Activated CD8-positive, alpha-beta T cell treated with anti-CD3 and anti-CD28 coated beads, Interleukin-2, amount 10 ng/mL, durations not matched to agents 7 days and 5 days (primary cell): ENCODE measurements at regions of chr3 and their contacts with region 1.

Region 1: DNA sequence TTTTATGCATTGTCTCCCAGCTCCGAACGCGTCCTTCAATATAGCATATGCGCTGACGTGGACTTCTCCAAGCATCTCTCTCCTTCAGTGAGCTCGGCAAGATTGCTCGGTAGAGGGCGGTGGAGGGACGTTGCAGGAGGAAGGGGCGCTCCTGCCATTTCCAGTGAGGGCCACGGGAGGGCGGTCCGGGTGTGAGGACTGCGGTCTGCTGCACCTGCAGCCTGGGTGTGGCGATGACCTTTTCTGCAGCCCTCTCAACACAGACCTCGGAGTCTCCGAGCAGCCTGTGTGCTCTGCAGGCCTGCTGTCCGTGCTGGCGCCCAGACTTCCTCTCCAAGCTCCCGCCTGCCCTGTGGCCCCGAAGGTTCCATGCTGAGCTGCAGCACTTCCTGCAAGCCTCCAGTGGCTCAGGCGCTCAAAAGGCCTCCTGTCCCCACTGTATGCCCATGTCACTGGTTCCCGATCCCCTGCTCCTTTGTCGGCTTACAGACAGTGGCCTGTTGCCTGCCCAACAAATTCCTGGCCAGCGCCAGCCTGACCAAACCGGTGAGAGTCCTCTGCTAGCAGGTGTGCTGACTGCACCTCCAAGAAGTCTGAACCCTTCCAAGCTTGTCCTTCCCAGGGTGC is 8.9 kb upstream of the RTP3 start:
- DNase-seq: peak; percentile 96
- ATAC-seq: peak; percentile 99
- H3K4me3 Mint-ChIP-seq: peak overlapping the region; percentile 47
- H3K27ac Mint-ChIP-seq: peak overlapping the region; percentile 17
- H3K4me1 Mint-ChIP-seq: peaks cover 30% of the 10 kb centered on the region
- H3K27me3 Mint-ChIP-seq: peaks cover 12% of the 10 kb centered on the region

Region 2: DNA sequence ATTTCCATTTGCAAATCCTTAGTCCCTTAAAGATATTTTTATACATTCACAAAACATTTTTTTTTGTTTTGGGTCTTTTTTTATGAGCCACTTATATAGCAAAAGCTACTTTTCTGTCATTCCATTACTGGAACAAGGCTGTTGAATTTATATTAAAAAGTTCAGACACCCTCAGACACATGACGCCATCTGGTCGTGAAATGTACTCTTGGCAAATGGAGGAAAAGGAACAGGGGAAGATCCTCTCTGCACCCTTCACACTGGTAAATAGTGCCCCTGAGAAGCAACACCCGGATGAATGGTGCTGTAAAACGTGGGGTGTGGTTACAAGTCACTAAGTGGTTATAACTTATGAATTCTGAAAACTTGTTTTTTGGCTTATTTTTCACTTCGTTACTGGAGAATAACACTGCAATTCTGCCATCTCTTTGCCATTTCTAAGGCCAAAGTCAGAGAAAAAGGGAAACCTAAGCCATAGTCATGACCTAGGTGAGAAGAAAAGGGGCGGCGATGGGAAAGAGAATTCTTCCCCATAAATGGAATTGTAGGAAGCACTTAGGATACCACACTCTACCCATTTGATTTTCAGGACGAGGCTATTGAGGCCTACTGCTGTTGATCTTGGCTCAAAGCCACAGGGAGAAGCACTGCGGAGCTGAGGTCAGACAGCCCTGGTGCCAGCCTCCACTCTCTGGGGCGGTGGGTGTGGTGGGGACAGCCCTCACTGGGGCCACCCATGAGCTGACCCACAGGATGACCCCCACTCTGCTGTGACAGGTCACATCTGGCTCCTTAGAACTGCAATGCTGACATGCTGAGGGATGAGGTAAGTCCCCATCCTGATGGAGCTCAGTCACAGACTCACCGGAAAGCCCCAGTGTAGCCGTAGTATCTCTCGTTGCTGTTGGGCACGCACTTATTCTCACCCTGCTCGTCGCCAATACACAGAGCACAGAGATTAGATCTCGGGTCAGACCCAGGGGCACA is 46.0 kb before region 1 on chr3:
- CTCF ChIA-PET with region 1: interaction called, 13 read pairs
- POLR2A ChIA-PET with region 1: no interaction called
- DNase-seq: no peak
- ATAC-seq: no peak
- H3K4me3 Mint-ChIP-seq: no peak overlapping the region
- H3K27ac Mint-ChIP-seq: no peak overlapping the region
- H3K4me1 Mint-ChIP-seq: peaks cover 40% of the 10 kb centered on the region
- H3K27me3 Mint-ChIP-seq: peaks cover 15% of the 10 kb centered on the region

Region 3: DNA sequence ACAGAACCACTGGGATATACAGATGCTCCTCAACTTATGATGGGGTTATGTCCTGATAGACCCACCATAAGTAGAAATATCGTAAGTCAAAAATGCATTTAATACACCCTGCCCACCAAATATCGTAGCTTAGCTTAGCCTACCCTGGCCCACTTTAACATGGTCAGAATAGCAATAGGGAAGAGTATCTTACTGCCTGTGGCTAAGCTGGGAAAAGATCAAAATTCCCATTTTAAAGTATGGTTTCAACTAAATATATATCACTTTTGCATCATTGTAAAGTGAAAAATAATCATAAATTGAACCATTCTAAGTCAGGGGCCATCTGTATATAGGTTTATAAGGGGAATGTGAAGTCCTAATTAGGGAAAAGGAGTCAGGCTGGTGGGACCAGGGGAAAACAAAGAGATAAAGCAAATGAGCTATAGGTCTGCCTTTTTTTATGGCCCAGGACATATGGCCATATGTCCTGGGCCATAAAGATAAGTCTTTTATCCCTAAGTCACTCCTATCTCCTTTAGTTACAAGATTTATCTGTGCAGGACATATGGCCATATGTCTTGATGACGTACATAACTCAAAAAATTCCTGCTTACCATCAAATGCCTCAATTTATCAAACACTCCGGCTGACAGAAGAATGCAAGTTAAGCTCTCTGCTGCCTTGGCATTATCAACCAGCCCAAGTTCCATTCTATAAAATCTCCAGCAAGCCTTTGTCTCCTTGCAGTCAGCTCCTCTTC is 20.2 kb after region 1 on chr3:
- CTCF ChIA-PET with region 1: interaction called, 74 read pairs
- POLR2A ChIA-PET with region 1: no interaction called
- DNase-seq: no peak
- ATAC-seq: no peak
- H3K4me3 Mint-ChIP-seq: no peak overlapping the region
- H3K27ac Mint-ChIP-seq: no peak overlapping the region
- H3K4me1 Mint-ChIP-seq: peaks cover 8% of the 10 kb centered on the region
- H3K27me3 Mint-ChIP-seq: peaks cover 22% of the 10 kb centered on the region

Region 4: DNA sequence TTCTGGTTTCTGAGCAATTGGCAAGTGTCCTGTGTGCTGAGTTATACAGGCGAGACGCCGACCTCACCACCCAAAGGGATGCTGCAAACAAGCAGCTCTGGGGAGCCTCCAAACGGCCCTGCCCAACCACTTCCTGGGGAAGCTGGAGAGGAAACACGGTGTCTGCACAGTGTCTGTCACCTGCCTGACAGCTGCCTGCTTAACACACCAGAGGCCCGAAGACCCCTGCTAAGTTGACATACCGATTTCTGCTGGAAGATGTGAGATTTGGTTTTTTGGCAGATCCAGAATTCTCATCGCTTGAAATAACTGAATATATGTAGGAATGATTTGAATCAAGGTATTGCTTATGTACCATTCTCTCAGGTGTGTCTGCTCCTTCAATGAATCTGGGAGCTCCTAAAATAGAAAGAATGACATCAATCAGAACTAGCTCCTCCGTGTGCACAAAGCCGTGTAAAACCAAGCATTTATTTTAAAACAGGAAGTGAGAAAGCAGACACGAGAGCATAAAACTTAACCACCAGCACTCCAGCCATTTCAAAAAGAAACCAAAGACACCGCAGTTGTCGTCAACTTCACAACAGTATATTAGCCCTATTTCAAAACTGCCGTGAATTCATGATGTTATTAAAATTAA is 50.1 kb after region 1 on chr3:
- CTCF ChIA-PET with region 1: interaction called, 138 read pairs
- POLR2A ChIA-PET with region 1: interaction called, 6 read pairs
- DNase-seq: peak; percentile 93
- ATAC-seq: peak; percentile 97
- H3K4me3 Mint-ChIP-seq: peak overlapping the region; percentile 66
- H3K27ac Mint-ChIP-seq: peak overlapping the region; percentile 89
- H3K4me1 Mint-ChIP-seq: peaks cover 61% of the 10 kb centered on the region
- H3K27me3 Mint-ChIP-seq: peaks cover 11% of the 10 kb centered on the region

Region 5: DNA sequence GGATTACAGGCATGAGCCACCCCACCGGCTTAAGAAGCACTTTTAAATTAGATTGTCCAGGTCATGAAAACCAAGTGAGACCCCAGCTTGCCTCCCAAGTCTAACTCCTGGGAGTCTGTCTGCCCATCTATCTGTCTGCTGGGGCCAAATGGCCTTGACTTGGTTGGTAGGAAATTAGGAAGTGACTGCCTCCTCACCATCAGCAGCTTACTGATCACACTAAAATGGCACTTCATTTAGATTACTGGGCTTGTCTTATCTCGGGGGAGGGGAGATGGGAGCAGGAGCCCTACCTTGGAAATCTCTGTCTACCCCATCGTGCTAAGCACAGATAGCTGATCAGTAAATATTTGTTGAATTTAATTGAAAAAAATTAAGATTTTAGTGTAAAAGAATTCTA is 82.8 kb after region 1 on chr3:
- CTCF ChIA-PET with region 1: interaction called, 11 read pairs
- POLR2A ChIA-PET with region 1: no interaction called
- DNase-seq: no peak
- ATAC-seq: no peak
- H3K4me3 Mint-ChIP-seq: no peak overlapping the region
- H3K27ac Mint-ChIP-seq: no peak overlapping the region
- H3K4me1 Mint-ChIP-seq: no peaks in the 10 kb centered on the region
- H3K27me3 Mint-ChIP-seq: peaks cover 29% of the 10 kb centered on the region

Region 6: DNA sequence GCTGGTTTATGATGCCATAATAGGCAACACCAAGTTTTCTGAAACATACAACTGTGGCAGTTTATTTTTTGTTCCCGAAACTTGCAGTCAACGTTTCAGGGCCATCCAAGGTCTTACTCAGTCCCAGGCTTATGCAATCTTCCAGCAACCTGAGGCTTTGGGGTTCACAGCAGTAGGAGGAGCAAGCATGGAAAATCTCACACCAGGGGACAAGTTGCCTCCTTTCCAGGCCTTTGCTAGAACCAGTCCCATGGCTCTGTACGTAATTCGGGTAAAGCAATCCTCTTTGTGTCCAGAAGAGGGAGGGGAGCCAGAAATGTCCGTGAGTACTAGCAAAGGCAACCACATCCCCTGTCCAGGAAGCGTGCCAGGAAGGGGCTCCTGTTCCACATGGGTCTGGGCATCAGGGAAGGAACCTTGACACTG is 118.8 kb after region 1 on chr3:
- CTCF ChIA-PET with region 1: interaction called, 11 read pairs
- POLR2A ChIA-PET with region 1: no interaction called
- DNase-seq: no peak
- ATAC-seq: no peak
- H3K4me3 Mint-ChIP-seq: no peak overlapping the region
- H3K27ac Mint-ChIP-seq: no peak overlapping the region
- H3K4me1 Mint-ChIP-seq: no peaks in the 10 kb centered on the region
- H3K27me3 Mint-ChIP-seq: peaks cover 20% of the 10 kb centered on the region